CD8-positive, alpha-beta memory T cell (primary cell): ENCODE measurements at regions of chr14 and their contacts with region 1.

Region 1: DNA sequence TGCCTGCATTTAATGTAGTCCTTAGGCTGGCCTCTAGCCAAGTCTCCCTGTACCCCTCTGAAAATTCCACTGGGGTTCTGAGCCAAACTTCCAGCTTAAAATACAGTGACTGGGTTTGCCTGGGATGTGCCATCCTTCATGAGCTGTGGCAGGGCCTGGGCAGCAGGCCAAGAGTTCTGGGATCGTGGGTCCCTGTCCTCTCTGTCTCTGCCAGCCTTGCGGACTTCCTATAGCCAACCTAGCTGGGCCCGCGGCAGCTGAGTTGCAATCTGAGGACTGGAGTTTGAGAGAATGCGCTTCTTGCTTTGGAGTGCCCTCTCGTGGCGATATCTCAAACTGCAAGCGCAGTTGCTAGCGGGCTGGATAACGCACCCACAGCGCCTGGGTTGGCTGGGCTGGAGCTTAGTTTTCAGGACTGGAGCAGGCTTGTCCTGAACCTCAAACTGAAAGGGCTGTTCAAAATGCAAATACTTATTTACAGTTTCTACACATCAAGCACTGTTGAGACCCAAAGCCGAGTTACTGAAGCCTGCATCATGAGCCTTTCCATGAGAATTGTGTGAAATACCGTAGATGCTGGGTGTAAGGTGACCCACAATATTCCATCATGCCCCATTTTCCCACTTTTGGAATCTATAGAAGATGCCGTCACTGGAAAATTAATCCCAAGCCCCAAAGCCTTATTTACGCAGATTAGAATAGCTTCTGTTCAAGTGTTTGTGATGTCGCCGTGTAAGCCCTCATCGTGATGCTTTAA is 7.3 kb upstream of the IFI27L2 start:
- DNase-seq: peak; percentile 69 to 87 (median 72)
- H3K4me3 ChIP-seq: no peak overlapping the region
- H3K4me3 Mint-ChIP-seq: no peak overlapping the region
- H3K27ac ChIP-seq: no peak overlapping the region
- H3K27ac Mint-ChIP-seq: peak overlapping the region in 1 of 8 donors; percentile 29
- H3K4me1 ChIP-seq: no peaks in the 10 kb centered on the region
- H3K4me1 Mint-ChIP-seq: peaks cover 0 to 5% (median 0%) of the 10 kb centered on the region in 3 donors
- H3K27me3 ChIP-seq: peaks cover 4% of the 10 kb centered on the region
- H3K27me3 Mint-ChIP-seq: peaks cover 5 to 9% of the 10 kb centered on the region in 2 donors

Region 2: DNA sequence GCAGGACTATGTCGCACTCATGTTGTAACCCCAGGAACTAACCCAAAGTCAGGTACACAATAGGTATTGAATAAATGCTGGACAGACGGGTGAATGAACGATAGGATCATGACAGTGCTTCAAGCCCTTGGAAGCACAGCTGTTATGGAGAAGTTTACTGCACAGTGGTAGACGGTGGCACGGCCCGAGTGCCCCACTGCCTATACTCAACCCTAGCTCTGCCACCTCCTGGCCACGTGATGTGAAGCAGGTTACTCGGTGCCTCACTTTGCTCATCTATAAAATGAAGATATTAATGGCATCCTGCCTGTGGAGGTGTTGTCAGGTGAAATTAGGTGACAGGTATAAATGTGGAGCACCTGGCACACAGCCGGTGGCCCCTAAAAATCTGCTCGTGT is 166.2 kb before region 1 on chr14:
- CTCF ChIA-PET with region 1: interaction called, 11 read pairs
- POLR2A ChIA-PET with region 1: no interaction called
- DNase-seq: peak; percentile 51 to 82 (median 60)
- H3K4me3 ChIP-seq: peak overlapping the region; percentile 75
- H3K4me3 Mint-ChIP-seq: peak overlapping the region; percentile 79 to 91 (median 90)
- H3K27ac ChIP-seq: no peak overlapping the region
- H3K27ac Mint-ChIP-seq: peak overlapping the region; percentile 65 to 96 (median 90)
- H3K4me1 ChIP-seq: peaks cover 15% of the 10 kb centered on the region
- H3K4me1 Mint-ChIP-seq: peaks cover 38 to 92% (median 57%) of the 10 kb centered on the region in 3 donors
- H3K27me3 ChIP-seq: no peaks in the 10 kb centered on the region
- H3K27me3 Mint-ChIP-seq: peaks cover 0 to 2% of the 10 kb centered on the region in 2 donors

Region 3: GRCh38 chr14:94036313-94037050 is 100.3 kb before region 1 on chr14:
- CTCF ChIA-PET with region 1: interaction called, 64 read pairs
- POLR2A ChIA-PET with region 1: no interaction called
- DNase-seq: peak; percentile 60 to 80 (median 63)
- H3K4me3 ChIP-seq: no peak overlapping the region
- H3K4me3 Mint-ChIP-seq: no peak overlapping the region
- H3K27ac ChIP-seq: no peak overlapping the region
- H3K27ac Mint-ChIP-seq: peak overlapping the region in 2 of 8 donors; percentile 47 to 85
- H3K4me1 ChIP-seq: no peaks in the 10 kb centered on the region
- H3K4me1 Mint-ChIP-seq: peaks cover 3 to 7% (median 5%) of the 10 kb centered on the region in 3 donors
- H3K27me3 ChIP-seq: no peaks in the 10 kb centered on the region
- H3K27me3 Mint-ChIP-seq: no peaks in the 10 kb centered on the region

Region 4: DNA sequence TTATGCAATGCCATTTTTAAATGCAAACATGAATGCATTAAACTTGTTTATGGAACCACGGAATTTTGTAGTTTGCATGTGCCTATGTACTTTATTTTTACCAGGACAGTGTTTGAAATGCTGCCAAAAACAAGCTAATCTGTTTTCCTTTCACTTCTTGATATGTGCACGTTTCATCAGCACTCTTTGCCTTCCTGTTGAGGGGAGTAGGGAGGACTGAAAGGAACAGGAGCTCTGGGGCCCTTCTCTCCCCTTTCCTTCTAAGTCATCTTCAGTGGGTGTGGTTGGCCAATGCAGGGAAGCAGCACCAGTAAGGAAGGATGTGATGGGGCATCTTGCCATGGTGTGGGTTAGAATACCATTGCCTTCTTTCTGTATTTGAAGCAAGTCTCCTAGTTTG is 25.2 kb after region 1 on chr14:
- CTCF ChIA-PET with region 1: interaction called, 16 read pairs
- POLR2A ChIA-PET with region 1: no interaction called
- DNase-seq: no peak
- H3K4me3 ChIP-seq: no peak overlapping the region
- H3K4me3 Mint-ChIP-seq: peak overlapping the region in 1 of 7 donors; percentile 33
- H3K27ac ChIP-seq: no peak overlapping the region
- H3K27ac Mint-ChIP-seq: peak overlapping the region in 5 of 8 donors; percentile 17 to 90 (median 44)
- H3K4me1 ChIP-seq: peaks cover 45% of the 10 kb centered on the region
- H3K4me1 Mint-ChIP-seq: peaks cover 33 to 59% (median 34%) of the 10 kb centered on the region in 3 donors
- H3K27me3 ChIP-seq: no peaks in the 10 kb centered on the region
- H3K27me3 Mint-ChIP-seq: peaks cover 6 to 14% of the 10 kb centered on the region in 2 donors

Region 5: GRCh38 chr14:94180655-94181271 is 44.0 kb after region 1 on chr14:
- CTCF ChIA-PET with region 1: interaction called, 22 read pairs
- POLR2A ChIA-PET with region 1: no interaction called
- DNase-seq: peak in 2 of 5 donors; percentile 62 to 63
- H3K4me3 ChIP-seq: no peak overlapping the region
- H3K4me3 Mint-ChIP-seq: peak overlapping the region; percentile 30 to 68 (median 40)
- H3K27ac ChIP-seq: peak overlapping the region; percentile 40
- H3K27ac Mint-ChIP-seq: peak overlapping the region; percentile 15 to 87 (median 45)
- H3K4me1 ChIP-seq: no peaks in the 10 kb centered on the region
- H3K4me1 Mint-ChIP-seq: peaks cover 9 to 22% (median 18%) of the 10 kb centered on the region in 3 donors
- H3K27me3 ChIP-seq: no peaks in the 10 kb centered on the region
- H3K27me3 Mint-ChIP-seq: peaks cover 13 to 37% of the 10 kb centered on the region in 2 donors